Left cardiac atrium (tissue), 4 donors: ENCODE measurements at regions of chr5 and their contacts with region 1.

Region 1: DNA sequence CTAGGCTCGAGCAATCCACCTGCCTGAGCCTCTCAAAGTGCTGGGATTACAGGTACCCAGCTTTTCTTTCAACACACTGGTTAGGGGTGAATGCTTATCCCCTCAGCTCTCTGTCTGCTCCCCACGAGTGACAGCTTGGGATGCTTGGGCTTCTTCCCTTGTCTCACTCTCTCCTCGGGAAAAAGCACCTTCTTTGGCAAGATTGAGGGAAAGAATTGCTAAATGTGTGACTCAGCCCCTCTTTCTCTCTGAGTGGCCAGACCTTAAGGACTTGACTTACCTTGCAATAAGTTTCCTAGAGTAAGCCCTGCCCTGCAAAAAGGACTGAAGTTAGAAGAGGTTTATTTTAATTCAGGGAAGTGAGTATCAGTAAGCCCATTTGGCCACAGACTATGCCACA is 68.1 kb upstream of the ERBIN start:
- DNase-seq: no peak
- ATAC-seq: no peak

Region 2: DNA sequence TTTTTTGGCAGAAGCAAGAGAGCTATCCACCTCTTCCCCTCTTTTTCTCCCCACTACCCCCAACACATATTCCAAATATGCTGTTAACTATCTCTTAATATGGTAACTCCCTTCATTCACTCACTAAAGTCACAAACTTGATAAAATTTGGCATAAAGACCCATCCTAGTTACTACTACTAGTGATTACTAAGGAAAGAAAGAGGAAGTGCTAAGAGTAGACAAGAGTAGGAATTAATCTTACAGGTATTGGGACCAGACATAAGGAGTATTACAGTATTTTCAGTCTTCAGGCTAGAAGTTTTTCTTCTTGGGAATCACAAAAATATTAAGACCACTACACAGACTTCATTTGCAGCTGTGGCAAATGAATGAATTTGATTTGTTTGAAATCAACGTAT is 378.8 kb before region 1 on chr5:
- intact Hi-C with region 1: no loop called
- DNase-seq: no peak
- ATAC-seq: no peak

Region 3: GRCh38 chr5:65907138-65907537 is 48.8 kb after region 1 on chr5:
- intact Hi-C with region 1: loop called in 1 of 2 experiments (anchors 10 kb)
- DNase-seq: no peak
- ATAC-seq: no peak

Region 4: GRCh38 chr5:66570201-66570600 is 711.9 kb after region 1 on chr5:
- intact Hi-C with region 1: no loop called
- DNase-seq: no peak
- ATAC-seq: no peak